GM12878 (cell line): ENCODE measurements at regions of chr12 and their contacts with region 1.

Region 1: DNA sequence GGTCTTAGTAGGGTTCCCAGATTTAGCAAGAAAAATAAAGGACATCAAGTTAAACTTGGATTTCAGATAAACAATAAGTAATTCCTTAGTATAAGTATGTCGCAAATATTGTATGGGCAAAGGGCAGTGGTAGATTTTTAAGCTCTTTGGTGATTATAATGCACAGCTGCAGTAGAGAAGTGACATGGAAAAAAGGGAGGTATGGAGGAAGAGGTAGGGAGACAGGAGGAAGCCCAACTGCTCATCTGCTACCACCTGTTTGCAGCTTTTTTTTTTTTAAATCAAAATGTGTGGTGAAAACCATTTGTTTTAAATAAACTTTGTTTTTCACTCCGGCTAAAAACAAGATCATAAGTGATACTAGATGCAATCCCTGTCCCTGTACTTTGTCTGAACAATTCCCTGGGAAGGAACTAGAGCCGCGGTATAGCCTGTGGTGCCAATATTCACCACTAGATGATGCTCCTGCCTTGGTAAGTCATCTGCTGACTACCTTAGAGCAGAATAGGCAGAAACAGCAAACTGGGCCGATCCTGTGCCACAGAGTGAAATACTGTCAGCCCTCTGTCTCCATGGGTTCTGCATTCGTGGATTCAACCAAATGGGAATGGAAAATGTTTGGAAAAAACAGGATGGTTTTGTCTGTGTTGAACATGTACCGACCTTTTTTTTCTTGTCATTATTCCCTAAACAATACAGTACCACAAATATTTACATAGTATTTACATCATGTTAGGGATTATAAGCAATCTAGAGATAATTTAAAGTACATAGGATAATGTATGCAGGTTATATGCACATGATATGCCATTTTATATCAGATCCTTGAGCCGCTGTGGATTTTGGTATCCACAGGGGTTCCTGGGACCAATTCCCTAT is 62.4 kb upstream of the PLBD1 start:
- DNase-seq: no peak
- ATAC-seq: peak; percentile 100
- H3K4me3 ChIP-seq: no peak overlapping the region
- H3K27ac ChIP-seq: no peak overlapping the region
- H3K4me1 ChIP-seq: no peaks in the 10 kb centered on the region
- H3K27me3 ChIP-seq: no peaks in the 10 kb centered on the region
- CTCF ChIP-seq: peak; percentile 98 to 100 (median 99); a peak in 5 of 6 replicates
- EP300 ChIP-seq: no peak
- POLR2A ChIP-seq: no peak
- RAD21 ChIP-seq: peak; percentile 100

Region 2: GRCh38 chr12:14216405-14217294 is 413.4 kb before region 1 on chr12:
- CTCF ChIA-PET with region 1: no interaction called
- POLR2A ChIA-PET with region 1: no interaction called
- RAD21 ChIA-PET with region 1: no interaction called
- SMC1A ChIA-PET with region 1: no interaction called
- in situ Hi-C with region 1: no loop called
- intact Hi-C with region 1: no loop called
- DNase-seq: no peak
- ATAC-seq: peak; percentile 41; the same call in 1 of the 3 replicates
- H3K4me3 ChIP-seq: peak overlapping the region; percentile 10; the same call in 1 of the 2 replicates
- H3K27ac ChIP-seq: peak overlapping the region; percentile 14; the same call in 1 of the 2 replicates
- H3K4me1 ChIP-seq: peaks cover 3% of the 10 kb centered on the region; the same call in 1 of the 2 replicates
- H3K27me3 ChIP-seq: no peaks in the 10 kb centered on the region
- CTCF ChIP-seq: no peak
- EP300 ChIP-seq: no peak
- POLR2A ChIP-seq: no peak
- RAD21 ChIP-seq: no peak

Region 3: DNA sequence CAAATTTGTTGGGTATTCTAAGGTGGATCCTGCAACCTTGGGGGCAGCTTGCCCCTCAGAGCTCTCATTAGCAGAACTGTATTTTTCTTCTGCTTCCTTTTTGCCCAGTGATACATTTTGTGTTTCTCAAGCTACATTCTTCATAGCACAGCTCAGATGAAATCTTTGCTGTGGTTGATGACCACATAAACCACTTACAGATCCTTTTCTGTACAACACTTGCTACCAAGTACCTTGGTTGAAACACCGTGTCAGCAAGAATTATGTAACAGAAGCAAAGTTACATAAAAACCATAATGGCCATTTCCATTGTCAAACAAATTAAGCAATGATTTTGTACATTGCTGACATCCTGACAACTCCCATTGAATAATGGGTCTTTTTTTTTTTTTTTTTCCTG is 52.7 kb before region 1 on chr12:
- CTCF ChIA-PET with region 1: interaction called, 28 read pairs
- POLR2A ChIA-PET with region 1: no interaction called
- RAD21 ChIA-PET with region 1: interaction called, 4 read pairs
- SMC1A ChIA-PET with region 1: interaction called, 5 read pairs
- in situ Hi-C with region 1: no loop called
- intact Hi-C with region 1: no loop called
- DNase-seq: peak; percentile 25
- ATAC-seq: peak; percentile 72
- H3K4me3 ChIP-seq: no peak overlapping the region
- H3K27ac ChIP-seq: no peak overlapping the region
- H3K4me1 ChIP-seq: peaks cover 2% of the 10 kb centered on the region; the same call in 1 of the 2 replicates
- H3K27me3 ChIP-seq: no peaks in the 10 kb centered on the region
- CTCF ChIP-seq: no peak
- EP300 ChIP-seq: no peak
- POLR2A ChIP-seq: no peak
- RAD21 ChIP-seq: no peak

Region 4: GRCh38 chr12:14613718-14614117 is 16.4 kb before region 1 on chr12:
- CTCF ChIA-PET with region 1: interaction called, 18 read pairs
- POLR2A ChIA-PET with region 1: no interaction called
- RAD21 ChIA-PET with region 1: interaction called, 7 read pairs
- SMC1A ChIA-PET with region 1: interaction called, 30 read pairs
- in situ Hi-C with region 1: no loop called
- intact Hi-C with region 1: no loop called
- DNase-seq: peak; percentile 93
- ATAC-seq: peak; percentile 95
- H3K4me3 ChIP-seq: peak overlapping the region; percentile 24; the same call in 1 of the 2 replicates
- H3K27ac ChIP-seq: peak overlapping the region; percentile 82
- H3K4me1 ChIP-seq: peaks cover 27% of the 10 kb centered on the region
- H3K27me3 ChIP-seq: no peaks in the 10 kb centered on the region
- CTCF ChIP-seq: no peak
- EP300 ChIP-seq: peak; percentile 86 to 98
- POLR2A ChIP-seq: no peak; the same call in 1 of the 2 replicates
- RAD21 ChIP-seq: no peak

Region 5: GRCh38 chr12:14618983-14619382 is 11.1 kb before region 1 on chr12:
- CTCF ChIA-PET with region 1: interaction called, 18 read pairs
- POLR2A ChIA-PET with region 1: interaction called, 3 read pairs
- RAD21 ChIA-PET with region 1: interaction called, 7 read pairs
- SMC1A ChIA-PET with region 1: interaction called, 30 read pairs
- in situ Hi-C with region 1: no loop called
- intact Hi-C with region 1: no loop called
- DNase-seq: no peak
- ATAC-seq: no peak
- H3K4me3 ChIP-seq: no peak overlapping the region
- H3K27ac ChIP-seq: no peak overlapping the region
- H3K4me1 ChIP-seq: peaks cover 23% of the 10 kb centered on the region
- H3K27me3 ChIP-seq: no peaks in the 10 kb centered on the region
- CTCF ChIP-seq: 0 out of 6 replicates have a peak, but pooled peaks of 1 of the 3 experiments have one; percentile 16
- EP300 ChIP-seq: no peak
- POLR2A ChIP-seq: no peak
- RAD21 ChIP-seq: peak; percentile 48

Region 6: GRCh38 chr12:14664510-14664909 is 34.4 kb after region 1 on chr12:
- CTCF ChIA-PET with region 1: interaction called, 44 read pairs
- POLR2A ChIA-PET with region 1: interaction called, 7 read pairs
- RAD21 ChIA-PET with region 1: interaction called, 8 read pairs
- SMC1A ChIA-PET with region 1: interaction called, 27 read pairs
- in situ Hi-C with region 1: no loop called
- intact Hi-C with region 1: loop called (anchors 1 kb)
- DNase-seq: no peak
- ATAC-seq: peak; percentile 71
- H3K4me3 ChIP-seq: no peak overlapping the region
- H3K27ac ChIP-seq: no peak overlapping the region
- H3K4me1 ChIP-seq: no peaks in the 10 kb centered on the region
- H3K27me3 ChIP-seq: no peaks in the 10 kb centered on the region
- CTCF ChIP-seq: peak; percentile 50 to 72 (median 56); a peak in 5 of 6 replicates
- EP300 ChIP-seq: no peak
- POLR2A ChIP-seq: no peak
- RAD21 ChIP-seq: peak; percentile 93

Region 7: DNA sequence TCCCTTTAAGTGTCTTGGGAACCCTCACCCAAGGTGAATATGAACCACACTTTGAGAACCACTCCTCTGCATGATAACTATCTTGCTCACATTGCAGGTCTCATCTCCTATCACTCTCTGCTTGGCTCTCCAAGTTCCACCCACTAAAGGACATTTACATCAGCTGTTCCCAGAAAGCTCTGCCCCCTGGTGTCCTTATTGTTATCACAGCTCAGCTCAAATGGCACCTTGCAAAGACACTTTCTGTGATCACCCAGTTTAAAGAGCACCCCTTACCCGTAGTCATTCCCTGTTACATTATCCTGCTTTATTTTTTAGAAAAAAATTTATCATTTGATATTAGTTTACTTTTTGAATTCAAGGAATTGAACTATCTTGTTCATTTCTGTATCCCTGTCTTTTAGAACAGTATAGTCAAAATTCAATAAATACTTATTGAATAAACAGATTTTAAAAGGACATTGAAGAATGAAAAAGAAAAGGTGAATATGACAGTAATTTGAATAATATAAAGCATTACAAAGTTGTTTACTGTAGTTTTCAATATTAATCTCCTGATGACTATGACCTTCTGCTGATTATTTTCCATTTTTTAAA is 86.9 kb after region 1 on chr12:
- CTCF ChIA-PET with region 1: interaction called, 46 read pairs
- POLR2A ChIA-PET with region 1: no interaction called
- RAD21 ChIA-PET with region 1: interaction called, 22 read pairs
- SMC1A ChIA-PET with region 1: interaction called, 28 read pairs
- in situ Hi-C with region 1: loop called (anchors 10 kb)
- intact Hi-C with region 1: loop called (anchors 1 kb)
- DNase-seq: no peak
- ATAC-seq: peak; percentile 94
- H3K4me3 ChIP-seq: no peak overlapping the region
- H3K27ac ChIP-seq: no peak overlapping the region
- H3K4me1 ChIP-seq: no peaks in the 10 kb centered on the region
- H3K27me3 ChIP-seq: no peaks in the 10 kb centered on the region
- CTCF ChIP-seq: peak; percentile 56 to 70 (median 63)
- EP300 ChIP-seq: no peak
- POLR2A ChIP-seq: no peak
- RAD21 ChIP-seq: peak; percentile 67

Region 8: DNA sequence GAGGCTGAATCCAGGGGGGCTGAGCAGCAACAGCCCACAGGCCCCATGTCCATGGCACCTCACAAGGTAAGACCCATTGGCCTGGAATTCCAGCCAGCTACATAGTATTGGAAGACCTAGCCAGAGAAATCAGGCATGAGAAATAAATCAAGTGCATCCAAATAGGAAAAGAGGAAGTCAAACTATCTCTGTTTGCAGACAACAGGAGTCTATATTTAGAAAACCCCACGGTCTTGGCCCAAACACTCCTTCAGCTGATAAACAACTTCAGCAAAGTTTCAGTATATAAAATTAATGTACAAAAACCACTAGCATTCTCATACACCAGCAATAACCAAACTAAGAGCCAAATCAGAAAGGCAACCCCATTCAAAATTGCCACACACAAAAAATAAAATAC is 359.7 kb after region 1 on chr12:
- CTCF ChIA-PET with region 1: interaction called, 6 read pairs
- POLR2A ChIA-PET with region 1: no interaction called
- RAD21 ChIA-PET with region 1: no interaction called
- SMC1A ChIA-PET with region 1: no interaction called
- in situ Hi-C with region 1: loop called (anchors 10 kb)
- intact Hi-C with region 1: no loop called
- DNase-seq: no peak
- ATAC-seq: peak; percentile 49
- H3K4me3 ChIP-seq: no peak overlapping the region
- H3K27ac ChIP-seq: peak overlapping the region; percentile 27
- H3K4me1 ChIP-seq: peaks cover 17% of the 10 kb centered on the region
- H3K27me3 ChIP-seq: no peaks in the 10 kb centered on the region
- CTCF ChIP-seq: no peak
- EP300 ChIP-seq: 0 out of 4 replicates have a peak, but pooled peaks of 1 of the 2 experiments have one; percentile 14
- POLR2A ChIP-seq: no peak
- RAD21 ChIP-seq: no peak